A673 (cell line): ENCODE measurements at regions of chr9 and their contacts with region 1.

Region 1: GRCh38 chr9:100598641-100599145 is 20.8 kb downstream of the CAVIN4 start:
- DNase-seq: peak; percentile 87
- H3K4me3 ChIP-seq: peak overlapping the region; percentile 42
- H3K27ac ChIP-seq: no peak overlapping the region
- H3K4me1 ChIP-seq: peaks cover 3% of the 10 kb centered on the region
- H3K27me3 ChIP-seq: no peaks in the 10 kb centered on the region
- CTCF ChIP-seq: no peak

Region 2: GRCh38 chr9:99162759-99163364 is 1435.8 kb before region 1 on chr9:
- CTCF ChIA-PET with region 1: no interaction called
- POLR2A ChIA-PET with region 1: interaction called, 3 read pairs
- intact Hi-C with region 1: loop called (anchors 2 kb)
- DNase-seq: peak; percentile 53
- H3K4me3 ChIP-seq: no peak overlapping the region
- H3K27ac ChIP-seq: no peak overlapping the region
- H3K4me1 ChIP-seq: peaks cover 6% of the 10 kb centered on the region
- H3K27me3 ChIP-seq: peaks cover under 1% of the 10 kb centered on the region
- CTCF ChIP-seq: peak; percentile 78

Region 3: DNA sequence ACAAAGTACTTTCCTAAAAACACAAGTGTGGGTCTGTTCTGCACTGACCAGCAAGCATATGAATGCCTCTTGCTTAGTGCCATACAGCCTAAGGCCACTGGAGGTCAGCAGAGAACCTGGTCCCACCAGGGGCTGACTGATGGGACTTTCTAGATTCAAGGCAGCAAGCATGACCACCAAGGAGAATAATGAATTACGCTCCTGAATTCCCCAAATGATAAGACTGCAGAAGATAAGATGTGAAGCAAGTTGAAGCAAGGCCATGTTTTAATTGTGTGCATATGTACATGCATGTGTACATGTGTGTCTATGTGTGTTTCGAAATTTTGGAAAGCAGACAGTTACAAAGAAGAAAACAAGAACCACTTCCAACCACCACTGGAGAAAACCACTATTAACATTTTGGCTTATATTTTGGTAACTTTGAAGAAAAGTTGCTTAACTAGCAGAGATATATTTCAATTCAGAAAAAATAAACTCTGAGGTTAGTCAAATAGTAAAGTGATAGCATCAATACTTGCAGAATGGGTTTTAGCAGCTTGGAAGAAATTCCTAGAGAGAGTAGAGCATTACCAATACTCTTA is 570.4 kb before region 1 on chr9:
- CTCF ChIA-PET with region 1: no interaction called
- POLR2A ChIA-PET with region 1: no interaction called
- intact Hi-C with region 1: loop called (anchors 2 kb)
- DNase-seq: peak; percentile 81
- H3K4me3 ChIP-seq: no peak overlapping the region
- H3K27ac ChIP-seq: no peak overlapping the region
- H3K4me1 ChIP-seq: peaks cover 20% of the 10 kb centered on the region
- H3K27me3 ChIP-seq: no peaks in the 10 kb centered on the region
- CTCF ChIP-seq: peak; percentile 94

Region 4: DNA sequence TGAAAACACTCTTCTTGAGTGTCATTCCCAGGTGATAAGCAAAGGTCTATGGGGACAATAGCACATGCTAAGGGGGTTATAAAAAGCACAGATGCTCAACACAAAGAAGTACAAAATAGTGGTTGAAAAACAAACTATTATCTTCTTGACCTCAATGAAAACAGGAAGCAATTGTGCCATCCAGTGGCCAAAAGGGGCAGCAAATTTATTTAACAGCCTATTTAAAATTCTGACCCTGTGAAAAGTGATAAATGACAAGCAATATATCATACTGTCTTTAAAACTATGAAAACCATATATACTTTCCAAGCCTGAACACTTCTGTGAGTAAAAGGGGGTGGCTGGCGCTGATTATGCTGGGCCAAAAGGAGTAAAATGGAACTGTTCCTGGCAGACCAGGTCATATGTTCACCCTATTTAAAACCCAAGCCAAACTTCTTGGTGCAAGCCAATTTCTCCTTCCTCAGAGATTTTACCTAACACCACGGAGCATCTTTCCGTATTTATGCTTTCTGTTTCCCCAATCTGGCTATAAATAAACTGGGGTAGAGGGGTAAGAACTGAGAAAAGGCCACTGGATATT is 275.6 kb before region 1 on chr9:
- CTCF ChIA-PET with region 1: no interaction called
- POLR2A ChIA-PET with region 1: no interaction called
- intact Hi-C with region 1: loop called (anchors 2 kb)
- DNase-seq: peak; percentile 65
- H3K4me3 ChIP-seq: no peak overlapping the region
- H3K27ac ChIP-seq: no peak overlapping the region
- H3K4me1 ChIP-seq: no peaks in the 10 kb centered on the region
- H3K27me3 ChIP-seq: no peaks in the 10 kb centered on the region
- CTCF ChIP-seq: peak; percentile 78

Region 5: DNA sequence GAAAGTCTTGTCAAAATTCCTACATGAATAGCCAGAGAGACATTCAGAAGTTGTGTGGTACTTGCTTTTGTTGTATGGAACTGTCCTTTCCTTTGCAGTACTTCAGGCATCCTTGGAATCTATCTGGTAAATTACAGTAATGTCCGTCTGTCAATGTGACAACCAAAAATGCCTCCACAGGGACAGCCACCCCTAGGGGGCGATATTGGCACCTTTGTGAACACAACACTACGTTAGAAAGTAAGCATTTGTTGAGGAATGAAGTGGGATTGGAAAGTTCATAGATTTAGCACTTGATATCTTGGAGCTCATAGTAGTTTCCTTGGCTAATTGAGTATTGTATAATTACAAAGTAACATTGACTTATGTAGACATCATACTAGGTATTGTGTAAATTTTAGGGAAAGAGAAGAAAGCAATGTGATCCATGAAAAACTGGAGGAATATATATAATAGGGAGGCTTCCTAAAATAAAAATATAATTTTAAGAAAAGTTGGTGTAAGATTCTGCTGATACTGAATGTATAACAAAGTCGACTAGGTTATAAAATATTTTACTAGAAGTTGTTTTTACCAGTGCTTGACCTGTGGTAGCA is 93.0 kb before region 1 on chr9:
- CTCF ChIA-PET with region 1: no interaction called
- POLR2A ChIA-PET with region 1: no interaction called
- intact Hi-C with region 1: loop called (anchors 1 kb)
- DNase-seq: peak; percentile 86
- H3K4me3 ChIP-seq: no peak overlapping the region
- H3K27ac ChIP-seq: no peak overlapping the region
- H3K4me1 ChIP-seq: no peaks in the 10 kb centered on the region
- H3K27me3 ChIP-seq: no peaks in the 10 kb centered on the region
- CTCF ChIP-seq: peak; percentile 95

Region 6: DNA sequence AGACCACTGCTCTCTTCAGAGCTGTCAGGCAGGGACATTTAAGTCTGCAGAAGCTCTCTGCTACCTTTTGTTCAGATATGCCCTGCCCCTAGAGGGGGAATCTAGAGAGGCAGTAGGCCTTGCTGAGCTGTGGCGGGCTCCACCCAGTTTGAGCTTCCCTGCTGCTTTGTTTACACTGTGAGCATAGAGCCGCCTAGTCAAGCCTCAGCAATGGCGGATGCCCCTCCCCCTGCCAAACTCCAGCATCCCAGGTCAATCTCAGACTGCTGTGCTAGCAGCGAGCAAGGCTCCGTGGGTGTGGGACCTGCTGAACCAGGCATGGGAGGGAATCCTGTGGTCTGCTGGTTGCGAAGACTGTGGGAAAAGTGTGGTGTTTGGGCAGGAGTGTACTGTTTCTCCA is 39.1 kb after region 1 on chr9:
- CTCF ChIA-PET with region 1: no interaction called
- POLR2A ChIA-PET with region 1: no interaction called
- intact Hi-C with region 1: no loop called
- DNase-seq: peak; percentile 6
- H3K4me3 ChIP-seq: no peak overlapping the region
- H3K27ac ChIP-seq: no peak overlapping the region
- H3K4me1 ChIP-seq: no peaks in the 10 kb centered on the region
- H3K27me3 ChIP-seq: peaks cover 16% of the 10 kb centered on the region
- CTCF ChIP-seq: no peak

Region 7: DNA sequence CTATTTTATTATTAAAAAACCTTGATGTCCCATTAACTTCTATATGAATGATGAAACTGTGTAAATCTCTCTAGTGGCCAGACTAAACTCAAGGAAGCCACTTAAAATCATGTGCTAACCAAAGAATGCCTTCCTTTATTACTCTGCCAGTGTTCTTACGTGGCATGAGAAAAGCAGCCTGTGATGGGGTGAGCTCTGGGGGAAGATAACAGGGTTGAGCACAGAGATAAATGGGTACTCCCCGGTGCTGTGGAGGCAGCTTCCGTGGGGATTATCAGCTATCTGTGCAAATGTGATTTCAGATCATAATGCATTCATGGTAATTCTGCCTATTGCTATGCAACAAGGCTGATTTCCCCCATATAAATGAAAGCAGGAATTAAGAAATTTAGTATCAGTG is 160.5 kb after region 1 on chr9:
- CTCF ChIA-PET with region 1: no interaction called
- POLR2A ChIA-PET with region 1: no interaction called
- intact Hi-C with region 1: no loop called
- DNase-seq: no peak
- H3K4me3 ChIP-seq: no peak overlapping the region
- H3K27ac ChIP-seq: no peak overlapping the region
- H3K4me1 ChIP-seq: no peaks in the 10 kb centered on the region
- H3K27me3 ChIP-seq: no peaks in the 10 kb centered on the region
- CTCF ChIP-seq: no peak

Region 8: DNA sequence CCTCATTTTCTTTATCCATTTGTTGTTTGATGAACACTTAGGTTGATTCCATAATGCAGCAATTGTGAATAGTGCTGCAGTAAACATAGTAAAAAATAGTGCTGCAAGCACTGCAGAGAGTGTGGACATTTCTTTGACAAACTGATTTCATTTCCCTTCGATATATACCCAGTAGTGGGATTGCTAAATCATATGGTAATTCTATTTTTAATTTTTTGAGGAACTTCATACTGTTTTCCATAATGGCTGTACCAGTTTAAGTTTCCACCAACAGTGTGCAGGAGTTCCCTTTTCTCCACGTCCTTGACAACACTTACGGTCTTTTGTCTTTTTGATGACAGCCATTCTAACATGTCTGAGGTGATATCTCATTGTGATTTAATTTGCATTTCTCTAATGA is 291.6 kb after region 1 on chr9:
- CTCF ChIA-PET with region 1: no interaction called
- POLR2A ChIA-PET with region 1: no interaction called
- intact Hi-C with region 1: no loop called
- DNase-seq: no peak
- H3K4me3 ChIP-seq: no peak overlapping the region
- H3K27ac ChIP-seq: no peak overlapping the region
- H3K4me1 ChIP-seq: no peaks in the 10 kb centered on the region
- H3K27me3 ChIP-seq: no peaks in the 10 kb centered on the region
- CTCF ChIP-seq: no peak

Region 9: DNA sequence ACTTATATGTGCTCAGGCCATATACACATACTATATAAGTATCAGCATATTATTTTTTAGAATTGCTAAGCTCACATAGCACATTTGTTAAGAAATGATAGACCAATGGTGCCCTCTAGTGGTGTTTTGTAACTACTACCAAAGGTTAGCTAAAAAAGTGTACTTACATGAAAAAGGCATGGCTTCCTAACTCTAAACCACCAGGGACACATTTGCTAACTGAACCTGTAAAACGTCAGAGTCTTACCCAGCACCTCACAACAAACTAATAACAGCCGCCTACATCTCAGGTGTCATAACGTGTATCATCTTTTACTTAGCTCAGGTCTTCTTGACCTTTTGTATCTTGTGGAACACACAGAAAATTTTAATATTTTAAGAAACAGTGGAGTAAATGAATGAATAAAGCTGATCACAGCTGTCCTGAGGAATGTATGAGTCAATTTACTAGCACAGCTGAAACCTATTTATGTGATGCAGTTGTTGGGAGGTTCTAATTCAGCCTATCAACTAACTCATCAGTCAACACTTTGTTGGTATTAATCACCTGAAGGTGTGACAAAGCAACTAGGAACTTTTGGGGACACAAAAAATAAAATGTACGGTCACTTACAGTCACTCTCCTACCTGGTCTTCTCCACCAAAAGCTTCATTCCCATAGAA is 713.2 kb after region 1 on chr9:
- CTCF ChIA-PET with region 1: interaction called, 37 read pairs
- POLR2A ChIA-PET with region 1: no interaction called
- intact Hi-C with region 1: loop called (anchors 1 kb)
- DNase-seq: peak; percentile 87
- H3K4me3 ChIP-seq: no peak overlapping the region
- H3K27ac ChIP-seq: no peak overlapping the region
- H3K4me1 ChIP-seq: peaks cover 18% of the 10 kb centered on the region
- H3K27me3 ChIP-seq: no peaks in the 10 kb centered on the region
- CTCF ChIP-seq: peak; percentile 73